Gastrocnemius medialis (tissue), 4 donors: ENCODE measurements at regions of chr1 and their contacts with region 1.

Region 1: GRCh38 chr1:10507111-10507879 is 32.5 kb downstream of the PEX14 start:
- DNase-seq: peak; percentile 56 to 73
- ATAC-seq: peak; percentile 89 to 93
- H3K4me3 ChIP-seq: no peak overlapping the region
- H3K27ac ChIP-seq: no peak overlapping the region
- H3K4me1 ChIP-seq: peaks cover 33 to 34% of the 10 kb centered on the region in 2 donors
- H3K27me3 ChIP-seq: no peaks in the 10 kb centered on the region
- CTCF ChIP-seq: peak; percentile 83 to 90 (median 87)
- POLR2A ChIP-seq: no peak

Region 2: GRCh38 chr1:10612436-10613160 is 105.3 kb after region 1 on chr1:
- in situ Hi-C with region 1: no loop called
- intact Hi-C with region 1: loop called (anchors 5 kb)
- DNase-seq: no peak
- ATAC-seq: peak in 1 of 2 donors; percentile 18
- H3K4me3 ChIP-seq: no peak overlapping the region
- H3K27ac ChIP-seq: peak overlapping the region; percentile 3 to 73 (median 64)
- H3K4me1 ChIP-seq: peaks cover 5 to 22% of the 10 kb centered on the region in 2 donors
- H3K27me3 ChIP-seq: no peaks in the 10 kb centered on the region
- CTCF ChIP-seq: no peak
- POLR2A ChIP-seq: no peak

Region 3: GRCh38 chr1:10679496-10680220 is 172.4 kb after region 1 on chr1:
- in situ Hi-C with region 1: no loop called
- intact Hi-C with region 1: loop called (anchors 5 kb)
- DNase-seq: no peak
- ATAC-seq: no peak
- H3K4me3 ChIP-seq: no peak overlapping the region
- H3K27ac ChIP-seq: peak overlapping the region in 3 of 4 donors; percentile 22 to 81 (median 37)
- H3K4me1 ChIP-seq: peaks cover 78 to 81% of the 10 kb centered on the region in 2 donors
- H3K27me3 ChIP-seq: no peaks in the 10 kb centered on the region
- CTCF ChIP-seq: no peak
- POLR2A ChIP-seq: no peak

Region 4: DNA sequence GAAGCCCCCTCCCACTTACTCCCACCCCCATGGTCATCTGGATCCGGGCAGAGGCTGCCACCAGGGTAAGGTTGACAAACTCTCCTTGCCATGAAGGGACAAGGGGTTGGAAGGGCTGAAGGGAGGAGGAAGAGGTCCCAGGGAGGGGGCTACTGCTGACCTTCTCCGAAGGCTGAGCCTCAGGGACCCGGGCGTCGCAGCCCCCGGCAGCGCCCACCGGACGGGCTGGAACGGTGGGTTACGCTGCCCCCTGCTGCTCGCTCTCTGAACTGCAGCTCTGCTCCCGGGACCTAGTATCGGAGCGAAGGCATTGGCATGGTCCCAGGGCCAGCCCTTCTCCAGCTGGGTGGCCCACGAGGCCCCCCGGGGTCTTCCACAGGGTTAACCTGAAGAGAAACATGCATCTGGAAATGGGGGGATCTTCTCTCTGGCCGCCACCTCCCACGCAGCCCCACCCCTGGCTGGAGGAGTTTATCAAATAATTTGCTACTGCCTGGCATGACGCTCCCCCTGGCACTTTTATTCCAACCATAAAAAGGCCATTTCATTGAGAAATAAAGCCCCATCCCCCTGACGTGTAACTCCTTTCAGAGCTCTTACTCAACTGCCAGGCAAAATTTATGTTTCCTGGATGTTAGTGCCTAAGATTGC is 434.7 kb after region 1 on chr1:
- in situ Hi-C with region 1: no loop called
- intact Hi-C with region 1: loop called (anchors 5 kb)
- DNase-seq: peak in 1 of 2 donors; percentile 43
- ATAC-seq: peak in 1 of 2 donors; percentile 55
- H3K4me3 ChIP-seq: peak overlapping the region in 2 of 4 donors; percentile 7 to 22
- H3K27ac ChIP-seq: no peak overlapping the region
- H3K4me1 ChIP-seq: peaks cover 7 to 18% of the 10 kb centered on the region in 2 donors
- H3K27me3 ChIP-seq: no peaks in the 10 kb centered on the region
- CTCF ChIP-seq: peak; percentile 66 to 93 (median 89)
- POLR2A ChIP-seq: no peak